ENCODE measurements at regions of chr5 and their contacts with region 1.

Region 1: GRCh38 chr5:170638454-170639220 is 134.8 kb downstream of the KCNIP1 start:
- DNase-seq: peak; percentile 70 to 99
- H3K4me3 ChIP-seq: no peak overlapping the region
- H3K27ac ChIP-seq: no peak overlapping the region
- H3K4me1 ChIP-seq: peaks cover 10 to 13% (median 12%) of the 10 kb centered on the region in 4 experiments; a peak in 6 of 7 replicates
- H3K27me3 ChIP-seq: no peaks in the 10 kb centered on the region
- CTCF ChIP-seq: peak in 2 of 3 experiments; percentile 90 to 93; a peak in 3 of 4 replicates
- EP300 ChIP-seq: no peak
- POLR2A ChIP-seq: no peak
- RAD21 ChIP-seq: peak; percentile 97 to 99

Region 2: GRCh38 chr5:170603578-170604565 is 34.8 kb before region 1 on chr5:
- CTCF ChIA-PET with region 1: interaction called, 982 read pairs
- POLR2A ChIA-PET with region 1: no interaction called
- DNase-seq: peak; percentile 38 to 92
- H3K4me3 ChIP-seq: no peak overlapping the region
- H3K27ac ChIP-seq: no peak overlapping the region
- H3K4me1 ChIP-seq: no peaks in the 10 kb centered on the region
- H3K27me3 ChIP-seq: no peaks in the 10 kb centered on the region; a peak in 1 of 7 replicates
- CTCF ChIP-seq: peak; percentile 86 to 93 (median 91)
- EP300 ChIP-seq: no peak
- POLR2A ChIP-seq: no peak
- RAD21 ChIP-seq: peak; percentile 95

Region 3: GRCh38 chr5:170681013-170681433 is 42.4 kb after region 1 on chr5:
- CTCF ChIA-PET with region 1: interaction called, 10 read pairs
- POLR2A ChIA-PET with region 1: no interaction called
- DNase-seq: peak in 1 of 2 experiments; percentile 88
- H3K4me3 ChIP-seq: peak overlapping the region; percentile 36 to 59 (median 57); a peak in 7 of 8 replicates
- H3K27ac ChIP-seq: no peak overlapping the region
- H3K4me1 ChIP-seq: peaks cover 0 to 7% (median 2%) of the 10 kb centered on the region in 4 experiments; a peak in 2 of 7 replicates
- H3K27me3 ChIP-seq: peaks cover 6 to 15% (median 11%) of the 10 kb centered on the region in 4 experiments
- CTCF ChIP-seq: no peak
- EP300 ChIP-seq: no peak
- POLR2A ChIP-seq: no peak
- RAD21 ChIP-seq: peak in 1 of 2 experiments; percentile 14; a peak in 1 of 4 replicates

Measured in H1 (cell line).